Dorsolateral prefrontal cortex (tissue), 120 donors: ENCODE measurements at regions of chr22 and their contacts with region 1.

Region 1: DNA sequence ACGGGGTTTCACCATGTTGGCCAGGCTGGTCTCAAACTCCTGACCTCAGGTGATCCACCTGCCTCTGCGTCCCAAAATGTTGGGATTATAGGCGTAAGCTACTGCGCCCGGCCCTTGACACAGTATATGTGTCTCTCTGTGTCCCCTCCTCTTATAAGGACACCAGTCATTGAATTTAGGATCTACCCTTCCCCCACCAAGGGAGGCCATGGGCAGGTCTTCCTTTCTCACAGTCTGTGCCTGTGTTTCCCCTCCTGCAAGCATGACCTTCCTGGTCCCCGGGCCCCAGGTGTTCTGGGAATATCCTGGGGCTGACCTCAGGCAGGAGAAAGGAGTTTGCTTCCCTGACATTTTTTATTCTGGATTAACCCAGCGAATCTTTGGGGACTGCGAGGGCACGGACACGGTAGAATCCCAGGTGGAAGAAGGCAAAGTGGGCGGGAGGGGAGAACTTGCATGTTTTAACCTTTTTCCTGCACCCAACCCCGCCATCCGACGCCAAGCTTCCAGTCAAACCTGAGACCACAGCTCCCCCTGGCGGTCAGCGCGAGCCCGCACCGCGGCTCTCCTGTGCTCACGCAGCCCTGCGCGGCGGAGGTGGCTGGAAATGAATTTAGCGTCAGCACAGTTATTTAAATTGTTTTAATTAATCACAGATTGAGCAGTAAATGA is 42.1 kb upstream of the ISX start:
- DNase-seq: peak; percentile 46 to 82 (median 74)
- H3K4me3 ChIP-seq: peak overlapping the region in 18 of 59 donors; percentile 1 to 34 (median 20)
- H3K27ac ChIP-seq: no peak overlapping the region
- H3K27me3 ChIP-seq: peaks cover 0 to 26% (median 0%) of the 10 kb centered on the region in 45 donors
- CTCF ChIP-seq: peak; percentile 70 to 96 (median 88)

Region 2: DNA sequence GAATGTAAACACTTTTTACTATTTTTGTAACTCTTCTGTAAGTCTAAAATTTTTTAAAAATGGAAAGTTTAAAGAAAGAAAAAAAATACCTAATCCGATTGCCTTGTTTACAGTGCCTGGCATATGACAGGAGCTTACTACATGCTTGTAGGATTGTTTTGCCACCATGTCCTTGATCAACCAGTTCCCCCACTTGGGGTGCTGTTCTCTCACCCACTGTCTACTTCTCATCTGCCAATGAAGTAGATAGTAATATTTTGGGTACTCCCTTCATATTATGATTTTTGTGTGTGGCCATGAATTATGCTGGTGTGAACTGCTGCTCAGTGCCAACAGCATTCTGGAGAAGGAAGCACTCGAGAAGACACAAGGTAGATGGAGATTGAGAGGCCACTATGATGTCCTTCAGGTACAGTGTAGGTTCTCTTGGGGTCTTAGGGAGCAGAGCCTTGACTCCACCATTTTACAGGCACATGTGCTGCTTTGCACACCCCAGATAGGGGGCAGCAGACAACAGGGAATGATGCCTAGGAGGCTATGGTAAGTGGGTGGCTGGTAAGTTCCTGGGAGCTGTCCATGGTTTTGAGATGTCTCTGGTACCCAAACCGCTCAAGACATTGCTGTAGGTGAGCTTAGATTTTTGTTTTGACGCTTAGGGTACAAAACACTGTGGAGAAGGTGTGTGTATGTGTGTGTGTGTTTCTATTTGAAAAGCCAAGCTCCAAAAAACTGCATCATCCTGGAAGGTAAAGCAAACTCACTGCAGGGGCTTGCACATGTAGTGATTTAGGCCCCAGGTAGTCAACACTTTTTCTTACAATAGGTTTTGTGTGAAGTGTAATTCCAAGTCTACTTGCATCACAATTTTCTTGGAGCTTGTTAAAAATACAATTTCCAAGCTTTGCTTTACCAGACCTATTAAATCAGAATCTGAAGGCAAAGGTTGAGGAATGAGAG is 609.1 kb before region 1 on chr22:
- intact Hi-C with region 1: loop called in 1 of 2 experiments (anchors 10 kb)
- DNase-seq: no peak
- H3K4me3 ChIP-seq: no peak overlapping the region
- H3K27ac ChIP-seq: no peak overlapping the region
- H3K27me3 ChIP-seq: peaks cover 0 to 8% (median 0%) of the 10 kb centered on the region in 45 donors
- CTCF ChIP-seq: peak in 41 of 56 donors; percentile 10 to 59 (median 35)

Region 3: GRCh38 chr22:34976474-34976873 is 47.4 kb before region 1 on chr22:
- intact Hi-C with region 1: no loop called
- DNase-seq: no peak
- H3K4me3 ChIP-seq: no peak overlapping the region
- H3K27ac ChIP-seq: no peak overlapping the region
- H3K27me3 ChIP-seq: peaks cover 0 to 4% (median 0%) of the 10 kb centered on the region in 45 donors
- CTCF ChIP-seq: no peak